ENCODE measurements at regions of chr2 and their contacts with region 1.

Region 1: DNA sequence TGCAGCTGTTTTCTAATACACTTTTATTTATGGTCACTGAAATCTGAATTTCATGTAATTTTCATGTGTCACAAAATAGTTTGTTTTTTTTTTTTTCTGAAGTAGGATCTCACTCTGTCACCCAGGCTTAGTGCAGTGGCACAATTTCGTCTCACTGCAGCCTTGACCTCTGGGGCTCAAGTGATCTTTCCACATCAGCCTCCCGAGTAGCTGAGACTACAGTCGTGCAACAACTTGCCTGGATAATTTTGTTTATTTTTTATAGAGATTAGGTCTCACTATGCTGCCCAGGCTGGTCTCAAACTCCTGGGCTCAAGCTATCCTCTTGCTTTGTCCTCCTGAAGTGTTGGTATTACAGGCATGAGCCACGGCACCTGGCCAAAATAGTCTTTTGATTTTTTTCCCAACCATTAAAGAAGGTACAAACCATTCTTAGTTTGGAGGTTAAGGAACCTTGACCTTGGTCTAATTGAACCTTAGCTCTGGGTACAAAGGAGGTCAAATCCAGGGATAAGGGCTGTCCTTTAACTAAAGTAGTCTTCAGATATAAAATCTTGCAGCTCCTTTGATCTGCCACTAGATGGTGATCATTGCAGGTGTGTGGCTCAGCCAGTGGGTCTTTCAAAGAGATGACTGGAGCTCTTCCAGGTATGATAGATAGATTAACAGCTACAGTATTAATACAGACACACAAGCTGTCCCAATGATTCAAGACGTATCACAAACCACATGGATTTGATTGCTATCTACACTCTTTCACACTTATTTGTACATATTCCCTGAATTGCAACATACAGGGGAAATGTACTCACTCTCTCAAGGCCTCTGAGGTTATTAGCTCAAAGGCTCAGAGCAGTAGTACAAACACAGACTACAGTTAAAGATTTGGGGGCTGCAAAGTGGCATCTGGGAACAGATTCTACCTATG is 4.7 kb upstream of the KRCC1 start:
- DNase-seq: no peak
- ATAC-seq: peak; percentile 51; the same call in 1 of the 2 replicates
- H3K4me3 ChIP-seq: no peak overlapping the region
- H3K27ac ChIP-seq: no peak overlapping the region
- H3K4me1 ChIP-seq: peaks cover 4% of the 10 kb centered on the region; the same call in 1 of the 2 replicates
- H3K27me3 ChIP-seq: no peaks in the 10 kb centered on the region
- CTCF ChIP-seq: peak; percentile 87

Region 2: GRCh38 chr2:88049622-88050021 is 10.6 kb before region 1 on chr2:
- CTCF ChIA-PET with region 1: no interaction called
- POLR2A ChIA-PET with region 1: no interaction called
- in situ Hi-C with region 1: no loop called
- intact Hi-C with region 1: no loop called
- DNase-seq: no peak
- ATAC-seq: no peak
- H3K4me3 ChIP-seq: no peak overlapping the region
- H3K27ac ChIP-seq: no peak overlapping the region
- H3K4me1 ChIP-seq: peaks cover 11% of the 10 kb centered on the region; the same call in 1 of the 2 replicates
- H3K27me3 ChIP-seq: no peaks in the 10 kb centered on the region
- CTCF ChIP-seq: no peak

Region 3: GRCh38 chr2:88159955-88160415 is 99.7 kb after region 1 on chr2:
- CTCF ChIA-PET with region 1: interaction called, 43 read pairs
- POLR2A ChIA-PET with region 1: interaction called, 9 read pairs
- in situ Hi-C with region 1: no loop called
- intact Hi-C with region 1: loop called (anchors 1 kb)
- DNase-seq: peak; percentile 48
- ATAC-seq: peak; percentile 87
- H3K4me3 ChIP-seq: no peak overlapping the region
- H3K27ac ChIP-seq: no peak overlapping the region
- H3K4me1 ChIP-seq: no peaks in the 10 kb centered on the region
- H3K27me3 ChIP-seq: no peaks in the 10 kb centered on the region
- CTCF ChIP-seq: peak; percentile 85